CD8-positive, alpha-beta T cell (primary cell): ENCODE measurements at regions of chr6 and their contacts with region 1.

Region 1: DNA sequence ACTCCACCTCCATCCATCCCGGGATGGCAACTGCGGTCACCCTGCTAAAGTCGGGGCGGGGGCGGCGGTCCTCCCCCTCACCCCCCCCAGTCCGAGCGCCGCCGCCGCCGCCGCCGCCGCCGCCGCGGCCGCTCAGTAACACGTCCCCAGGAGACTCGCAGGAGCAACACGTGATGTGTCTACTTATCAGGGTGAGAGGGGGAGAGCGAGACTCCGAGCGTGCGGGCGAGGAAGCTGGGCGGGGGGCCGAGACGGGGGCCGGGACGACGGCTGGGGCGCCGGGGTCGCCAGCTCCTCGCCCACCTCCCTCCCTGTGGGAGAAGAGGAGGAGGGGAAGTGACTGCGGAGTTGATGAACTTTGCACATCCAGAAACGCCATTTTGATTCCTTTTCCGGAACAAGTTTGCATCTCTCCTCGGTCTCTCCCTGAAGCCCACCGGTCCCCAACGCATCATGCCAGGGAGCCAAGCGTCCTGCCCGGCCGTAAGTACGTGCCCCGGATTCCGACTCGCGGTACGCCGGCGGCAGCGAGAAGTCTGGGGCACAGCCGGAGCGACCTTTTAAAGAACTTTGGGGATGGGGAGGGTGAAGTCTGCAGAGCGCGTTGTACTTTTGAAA is at the start of gene RREB1:
- DNase-seq: peak; percentile 22 to 79 (median 60)
- ATAC-seq: peak; percentile 43
- H3K4me3 ChIP-seq: peak within 1 kb of the TSS; percentile 97
- H3K4me3 Mint-ChIP-seq: peak within 1 kb of the TSS; percentile 95
- H3K27ac ChIP-seq: peak within 1 kb of the TSS; percentile 71 to 84
- H3K27ac Mint-ChIP-seq: peak within 1 kb of the TSS; percentile 97
- H3K4me1 ChIP-seq: peaks cover 31% of the 10 kb centered on the region
- H3K4me1 Mint-ChIP-seq: peaks cover 41% of the 10 kb centered on the region
- H3K27me3 ChIP-seq: no peaks in the 10 kb centered on the region
- H3K27me3 Mint-ChIP-seq: no peaks in the 10 kb centered on the region
- CTCF ChIP-seq: no peak
- total RNA-seq, gene RREB1: 47.1 to 52.4 TPM

Region 2: GRCh38 chr6:6661684-6662083 is 446.0 kb before region 1 on chr6:
- CTCF ChIA-PET with region 1: no interaction called
- POLR2A ChIA-PET with region 1: no interaction called
- intact Hi-C with region 1: loop called in 1 of 2 experiments (anchors 10 kb)
- DNase-seq: no peak
- ATAC-seq: no peak
- H3K4me3 ChIP-seq: no peak overlapping the region
- H3K4me3 Mint-ChIP-seq: no peak overlapping the region
- H3K27ac ChIP-seq: no peak overlapping the region
- H3K27ac Mint-ChIP-seq: no peak overlapping the region
- H3K4me1 ChIP-seq: peaks cover 34% of the 10 kb centered on the region
- H3K4me1 Mint-ChIP-seq: peaks cover 56% of the 10 kb centered on the region
- H3K27me3 ChIP-seq: no peaks in the 10 kb centered on the region
- H3K27me3 Mint-ChIP-seq: no peaks in the 10 kb centered on the region
- CTCF ChIP-seq: no peak

Region 3: DNA sequence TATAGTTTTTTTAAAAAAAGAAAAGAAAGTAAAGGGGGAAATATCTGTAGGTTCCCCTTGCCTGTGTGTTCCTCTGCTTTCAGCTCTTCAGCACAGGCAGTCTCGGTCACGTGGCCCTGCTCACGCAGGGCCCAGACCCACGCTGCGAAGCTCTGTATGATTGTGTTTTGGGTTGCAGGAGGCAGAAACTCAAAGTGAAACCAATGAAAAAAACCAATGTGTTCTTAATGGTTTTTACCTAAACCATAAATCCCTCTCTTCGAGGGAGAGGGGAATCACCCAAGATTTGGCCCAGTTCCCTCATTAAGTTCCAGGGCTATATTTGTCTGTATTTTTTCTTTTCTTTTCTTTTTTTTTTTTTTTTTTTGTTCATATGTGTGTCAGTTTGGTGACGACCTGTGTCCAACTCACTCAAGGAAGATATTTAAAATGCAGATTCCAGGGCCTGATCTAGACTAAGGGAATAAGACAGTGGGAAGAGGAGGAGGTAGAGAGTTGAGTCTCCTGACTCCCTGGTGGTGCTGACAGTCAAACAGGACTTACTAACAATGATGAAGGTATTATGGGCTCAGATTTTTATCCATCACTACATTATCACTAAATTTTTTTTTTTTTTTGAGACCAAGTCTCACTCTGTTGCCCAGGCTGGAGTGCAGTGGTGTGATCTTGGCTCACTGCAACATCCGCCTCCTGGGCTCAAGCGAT is 33.7 kb before region 1 on chr6:
- CTCF ChIA-PET with region 1: no interaction called
- POLR2A ChIA-PET with region 1: interaction called, 3 read pairs
- intact Hi-C with region 1: loop called in 1 of 2 experiments (anchors 1 kb)
- DNase-seq: peak; percentile 16 to 82 (median 55)
- ATAC-seq: peak; percentile 99
- H3K4me3 ChIP-seq: peak overlapping the region in 1 of 2 experiments; percentile 20
- H3K4me3 Mint-ChIP-seq: peak overlapping the region; percentile 80
- H3K27ac ChIP-seq: no peak overlapping the region
- H3K27ac Mint-ChIP-seq: peak overlapping the region; percentile 91
- H3K4me1 ChIP-seq: no peaks in the 10 kb centered on the region
- H3K4me1 Mint-ChIP-seq: peaks cover 11% of the 10 kb centered on the region
- H3K27me3 ChIP-seq: no peaks in the 10 kb centered on the region
- H3K27me3 Mint-ChIP-seq: no peaks in the 10 kb centered on the region
- CTCF ChIP-seq: no peak

Region 4: DNA sequence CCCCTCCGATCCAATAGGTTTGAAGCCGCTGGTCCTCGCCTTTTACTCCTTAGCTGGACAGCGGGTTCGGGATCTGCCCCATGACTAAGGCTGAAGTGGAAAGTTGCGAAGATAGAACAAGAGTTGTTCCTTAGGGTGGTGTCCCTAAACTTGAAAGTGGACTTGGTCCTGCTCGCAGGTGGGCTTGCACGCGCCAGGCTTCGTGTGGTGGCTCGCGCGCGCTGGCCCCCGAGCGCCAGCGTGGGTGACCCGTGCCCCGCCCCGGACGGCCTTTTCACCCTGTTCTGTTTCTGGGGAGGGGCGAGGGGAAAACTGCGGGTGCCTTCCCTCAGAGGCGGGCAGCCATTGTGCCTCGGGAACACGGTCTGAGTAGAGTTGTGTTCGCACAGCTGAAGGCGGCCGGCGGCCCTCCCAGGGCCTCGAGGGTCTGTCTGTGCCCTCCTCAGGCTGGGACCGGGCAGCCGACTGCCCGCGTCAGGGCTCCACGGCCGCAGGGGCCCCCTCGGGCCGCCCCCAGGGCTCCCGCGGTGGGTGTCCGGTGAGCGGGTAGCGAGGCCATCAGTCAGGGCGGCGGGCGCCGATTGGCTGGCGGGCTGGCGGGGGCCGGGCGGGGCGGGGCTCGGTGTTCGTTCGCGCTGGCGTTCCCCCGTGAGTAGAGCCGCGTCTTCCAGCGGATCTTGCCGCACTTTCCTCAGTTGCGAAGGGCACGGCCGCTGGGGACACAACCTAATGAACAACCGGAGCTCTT is 33.1 kb after region 1 on chr6:
- CTCF ChIA-PET with region 1: interaction called, 7 read pairs
- POLR2A ChIA-PET with region 1: interaction called, 4 read pairs
- intact Hi-C with region 1: loop called (anchors 1 kb)
- DNase-seq: peak; percentile 56 to 84 (median 79)
- ATAC-seq: peak; percentile 82
- H3K4me3 ChIP-seq: peak overlapping the region; percentile 58 to 73
- H3K4me3 Mint-ChIP-seq: peak overlapping the region; percentile 89
- H3K27ac ChIP-seq: peak overlapping the region; percentile 51 to 64
- H3K27ac Mint-ChIP-seq: peak overlapping the region; percentile 91
- H3K4me1 ChIP-seq: peaks cover 62% of the 10 kb centered on the region
- H3K4me1 Mint-ChIP-seq: peaks cover 70% of the 10 kb centered on the region
- H3K27me3 ChIP-seq: no peaks in the 10 kb centered on the region
- H3K27me3 Mint-ChIP-seq: no peaks in the 10 kb centered on the region
- CTCF ChIP-seq: no peak

Region 5: DNA sequence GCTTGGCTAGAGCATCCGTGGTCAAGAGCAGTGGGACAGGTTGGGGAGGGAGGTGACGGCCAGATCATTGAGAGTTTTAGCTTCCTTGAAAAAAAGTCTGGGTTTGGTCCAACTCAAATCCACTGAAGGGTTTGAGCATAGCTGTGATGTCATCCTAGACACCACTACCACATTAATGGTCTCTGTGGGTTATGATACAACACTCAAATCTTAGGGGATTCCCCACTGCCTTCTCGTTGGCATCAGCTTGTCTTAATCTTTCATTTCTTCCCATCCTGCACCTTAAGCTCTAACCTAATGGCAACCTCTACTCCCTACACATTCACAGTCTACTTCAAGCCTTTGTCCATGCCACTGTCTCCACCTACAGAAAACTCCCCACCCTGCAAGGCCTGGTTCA is 695.5 kb after region 1 on chr6:
- CTCF ChIA-PET with region 1: no interaction called
- POLR2A ChIA-PET with region 1: no interaction called
- intact Hi-C with region 1: no loop called
- DNase-seq: peak in 1 of 9 experiments; percentile 22
- ATAC-seq: no peak
- H3K4me3 ChIP-seq: no peak overlapping the region
- H3K4me3 Mint-ChIP-seq: no peak overlapping the region
- H3K27ac ChIP-seq: no peak overlapping the region
- H3K27ac Mint-ChIP-seq: no peak overlapping the region
- H3K4me1 ChIP-seq: no peaks in the 10 kb centered on the region
- H3K4me1 Mint-ChIP-seq: no peaks in the 10 kb centered on the region
- H3K27me3 ChIP-seq: no peaks in the 10 kb centered on the region
- H3K27me3 Mint-ChIP-seq: peaks cover 12% of the 10 kb centered on the region
- CTCF ChIP-seq: no peak